Activated CD4-positive, alpha-beta T cell treated with anti-CD3 and anti-CD28 coated beads, Interleukin-2, amount 10 ng/mL, durations not matched to agents 24 days and 14 days (primary cell): ENCODE measurements at regions of chr4 and their contacts with region 1.

Region 1: GRCh38 chr4:10671366-10671765 is 13.2 kb downstream of the CLNK start:
- DNase-seq: peak; percentile 87
- H3K4me3 Mint-ChIP-seq: peak overlapping the region; percentile 43
- H3K27ac Mint-ChIP-seq: peak overlapping the region; percentile 85
- H3K4me1 Mint-ChIP-seq: peaks cover 31% of the 10 kb centered on the region
- H3K27me3 Mint-ChIP-seq: no peaks in the 10 kb centered on the region

Region 2: DNA sequence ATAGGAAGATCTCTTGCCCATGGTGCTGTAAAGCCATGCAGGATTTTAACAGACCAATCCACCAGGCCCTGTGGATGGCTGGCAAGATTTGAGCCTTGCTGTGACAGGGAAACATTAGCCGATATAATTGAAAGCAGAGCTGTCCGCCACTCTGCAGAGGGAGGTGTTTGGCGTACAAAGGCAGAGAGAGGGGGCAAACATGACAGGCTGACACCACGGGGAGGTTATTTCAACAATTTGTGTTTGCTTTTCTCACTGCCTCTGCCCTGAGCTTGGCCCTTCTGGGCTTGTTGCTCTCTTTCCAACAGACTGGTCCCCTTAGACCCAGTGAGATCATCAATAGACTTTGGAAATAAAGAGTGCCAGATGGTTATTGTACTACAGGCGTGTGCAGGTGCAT is 46.2 kb before region 1 on chr4:
- intact Hi-C with region 1: loop called (anchors 5 kb)
- DNase-seq: no peak
- H3K4me3 Mint-ChIP-seq: no peak overlapping the region
- H3K27ac Mint-ChIP-seq: no peak overlapping the region
- H3K4me1 Mint-ChIP-seq: peaks cover 14% of the 10 kb centered on the region
- H3K27me3 Mint-ChIP-seq: peaks cover 2% of the 10 kb centered on the region

Region 3: DNA sequence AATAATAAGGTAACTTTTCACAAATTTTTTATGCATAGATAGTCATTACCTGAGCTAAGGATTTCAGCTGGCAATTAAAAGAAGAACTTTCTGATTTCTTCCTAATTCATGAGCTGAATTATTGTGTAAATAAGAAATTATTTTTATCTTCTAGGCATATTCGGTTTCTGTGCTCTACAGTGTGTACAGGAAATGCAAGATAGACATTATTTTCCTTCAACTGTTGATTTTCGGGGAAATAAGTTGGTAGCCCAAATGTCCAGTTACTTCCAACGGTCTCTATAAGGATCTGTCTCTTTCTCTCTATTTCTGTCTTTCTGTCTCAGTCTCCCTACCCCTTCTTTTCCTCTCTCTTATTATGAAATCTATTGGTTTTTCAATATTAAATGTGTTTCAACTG is 150.5 kb after region 1 on chr4:
- intact Hi-C with region 1: no loop called
- DNase-seq: no peak
- H3K4me3 Mint-ChIP-seq: no peak overlapping the region
- H3K27ac Mint-ChIP-seq: no peak overlapping the region
- H3K4me1 Mint-ChIP-seq: no peaks in the 10 kb centered on the region
- H3K27me3 Mint-ChIP-seq: no peaks in the 10 kb centered on the region